ENCODE measurements at regions of chr15 and their contacts with region 1.

Region 1: GRCh38 chr15:53872410-53872809 is 105.8 kb upstream of the UNC13C start:
- DNase-seq: no peak
- H3K4me3 ChIP-seq: no peak overlapping the region
- H3K27ac ChIP-seq: no peak overlapping the region
- H3K4me1 ChIP-seq: no peaks in the 10 kb centered on the region
- H3K27me3 ChIP-seq: no peaks in the 10 kb centered on the region
- CTCF ChIP-seq: no peak

Region 2: DNA sequence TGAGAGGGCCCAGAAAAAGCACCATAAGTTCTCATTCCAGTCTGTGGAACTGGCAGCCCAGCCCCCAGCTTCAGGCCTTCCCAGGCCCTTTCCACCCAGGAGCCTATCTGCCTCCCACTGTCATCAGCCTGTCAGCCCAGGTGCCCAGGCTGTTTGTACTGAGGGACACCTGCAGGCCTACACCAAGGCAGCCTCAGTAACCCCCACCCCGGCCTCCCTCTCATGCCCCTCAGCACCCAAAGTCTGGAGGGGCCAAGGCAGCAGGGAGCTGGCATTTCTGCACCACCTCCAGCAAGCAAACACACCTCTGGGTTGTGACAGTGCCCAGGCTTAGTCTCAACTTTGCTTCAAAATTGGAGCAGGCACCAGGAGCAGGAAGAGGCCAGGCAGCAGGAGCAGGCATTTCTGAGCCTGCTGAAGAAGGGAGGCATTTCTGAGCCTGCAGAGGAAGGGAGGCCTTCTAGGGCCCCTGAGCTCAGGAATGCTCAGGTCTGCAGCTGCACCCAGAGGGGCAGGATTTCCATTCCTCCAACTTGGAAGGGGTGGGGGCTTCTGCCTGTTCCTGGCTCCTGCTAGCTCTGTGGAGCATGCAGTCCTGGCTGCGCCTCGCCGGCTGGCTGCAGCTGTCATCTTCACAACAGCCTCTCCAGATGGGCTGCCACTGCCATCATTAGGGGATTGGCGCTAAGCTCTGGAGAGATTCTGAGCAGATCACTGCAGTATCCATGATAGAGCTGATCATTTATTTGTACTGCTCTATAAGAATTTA is 502.0 kb after region 1 on chr15:
- intact Hi-C with region 1: loop called (anchors 2 kb)
- DNase-seq: no peak
- H3K4me3 ChIP-seq: no peak overlapping the region
- H3K27ac ChIP-seq: no peak overlapping the region
- H3K4me1 ChIP-seq: no peaks in the 10 kb centered on the region
- H3K27me3 ChIP-seq: no peaks in the 10 kb centered on the region
- CTCF ChIP-seq: no peak